Activated B cell treated with CpG ODN at 0.5 μM for 24 hours (primary cell): ENCODE measurements at regions of chr2 and their contacts with region 1.

Region 1: GRCh38 chr2:65640793-65641103 is 208.3 kb upstream of the SPRED2 start:
- DNase-seq: no peak
- ATAC-seq: no peak
- H3K4me3 Mint-ChIP-seq: no peak overlapping the region
- H3K27ac Mint-ChIP-seq: no peak overlapping the region
- H3K4me1 Mint-ChIP-seq: peaks cover 4% of the 10 kb centered on the region
- H3K27me3 Mint-ChIP-seq: peaks cover 13% of the 10 kb centered on the region
- CTCF ChIP-seq: no peak

Region 2: GRCh38 chr2:65605743-65606058 is 35.0 kb before region 1 on chr2:
- CTCF ChIA-PET with region 1: interaction called, 7 read pairs
- POLR2A ChIA-PET with region 1: no interaction called
- intact Hi-C with region 1: loop called (anchors 1 kb)
- DNase-seq: no peak
- ATAC-seq: no peak
- H3K4me3 Mint-ChIP-seq: peak overlapping the region; percentile 75
- H3K27ac Mint-ChIP-seq: peak overlapping the region; percentile 94
- H3K4me1 Mint-ChIP-seq: peaks cover 82% of the 10 kb centered on the region
- H3K27me3 Mint-ChIP-seq: no peaks in the 10 kb centered on the region
- CTCF ChIP-seq: no peak

Region 3: GRCh38 chr2:65710779-65711295 is 70.1 kb after region 1 on chr2:
- CTCF ChIA-PET with region 1: interaction called, 3 read pairs
- POLR2A ChIA-PET with region 1: no interaction called
- intact Hi-C with region 1: loop called (anchors 1 kb)
- DNase-seq: no peak
- ATAC-seq: no peak
- H3K4me3 Mint-ChIP-seq: no peak overlapping the region
- H3K27ac Mint-ChIP-seq: no peak overlapping the region
- H3K4me1 Mint-ChIP-seq: no peaks in the 10 kb centered on the region
- H3K27me3 Mint-ChIP-seq: peaks cover 14% of the 10 kb centered on the region
- CTCF ChIP-seq: no peak

Region 4: GRCh38 chr2:66228128-66228547 is 587.4 kb after region 1 on chr2:
- CTCF ChIA-PET with region 1: no interaction called
- POLR2A ChIA-PET with region 1: no interaction called
- intact Hi-C with region 1: no loop called
- DNase-seq: no peak
- ATAC-seq: no peak
- H3K4me3 Mint-ChIP-seq: no peak overlapping the region
- H3K27ac Mint-ChIP-seq: no peak overlapping the region
- H3K4me1 Mint-ChIP-seq: no peaks in the 10 kb centered on the region
- H3K27me3 Mint-ChIP-seq: peaks cover 1% of the 10 kb centered on the region
- CTCF ChIP-seq: no peak

Region 5: DNA sequence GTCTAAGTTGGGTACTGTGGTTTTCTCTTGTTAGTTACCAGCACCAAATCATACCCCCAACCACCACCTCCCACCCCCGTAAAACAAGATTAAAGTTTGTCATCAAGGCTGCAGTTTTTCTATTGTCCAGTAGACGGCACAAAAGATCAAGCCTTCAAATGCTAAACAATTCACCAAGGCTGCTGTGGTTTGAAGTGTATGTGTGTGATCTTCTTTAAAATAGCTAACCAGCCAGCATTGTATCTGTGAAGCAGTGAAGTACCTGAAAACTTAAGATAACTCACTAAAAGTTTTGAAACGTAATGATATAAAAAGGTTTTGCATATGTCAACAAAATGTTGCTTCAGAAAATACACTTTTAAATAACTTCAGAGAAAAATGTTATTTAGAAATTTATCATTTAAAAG is 788.3 kb after region 1 on chr2:
- CTCF ChIA-PET with region 1: interaction called, 4 read pairs
- POLR2A ChIA-PET with region 1: no interaction called
- intact Hi-C with region 1: loop called (anchors 5 kb)
- DNase-seq: no peak
- ATAC-seq: no peak
- H3K4me3 Mint-ChIP-seq: no peak overlapping the region
- H3K27ac Mint-ChIP-seq: no peak overlapping the region
- H3K4me1 Mint-ChIP-seq: peaks cover 20% of the 10 kb centered on the region
- H3K27me3 Mint-ChIP-seq: peaks cover 65% of the 10 kb centered on the region
- CTCF ChIP-seq: peak; percentile 29